ENCODE measurements at regions of chr15 and their contacts with region 1.

Region 1: DNA sequence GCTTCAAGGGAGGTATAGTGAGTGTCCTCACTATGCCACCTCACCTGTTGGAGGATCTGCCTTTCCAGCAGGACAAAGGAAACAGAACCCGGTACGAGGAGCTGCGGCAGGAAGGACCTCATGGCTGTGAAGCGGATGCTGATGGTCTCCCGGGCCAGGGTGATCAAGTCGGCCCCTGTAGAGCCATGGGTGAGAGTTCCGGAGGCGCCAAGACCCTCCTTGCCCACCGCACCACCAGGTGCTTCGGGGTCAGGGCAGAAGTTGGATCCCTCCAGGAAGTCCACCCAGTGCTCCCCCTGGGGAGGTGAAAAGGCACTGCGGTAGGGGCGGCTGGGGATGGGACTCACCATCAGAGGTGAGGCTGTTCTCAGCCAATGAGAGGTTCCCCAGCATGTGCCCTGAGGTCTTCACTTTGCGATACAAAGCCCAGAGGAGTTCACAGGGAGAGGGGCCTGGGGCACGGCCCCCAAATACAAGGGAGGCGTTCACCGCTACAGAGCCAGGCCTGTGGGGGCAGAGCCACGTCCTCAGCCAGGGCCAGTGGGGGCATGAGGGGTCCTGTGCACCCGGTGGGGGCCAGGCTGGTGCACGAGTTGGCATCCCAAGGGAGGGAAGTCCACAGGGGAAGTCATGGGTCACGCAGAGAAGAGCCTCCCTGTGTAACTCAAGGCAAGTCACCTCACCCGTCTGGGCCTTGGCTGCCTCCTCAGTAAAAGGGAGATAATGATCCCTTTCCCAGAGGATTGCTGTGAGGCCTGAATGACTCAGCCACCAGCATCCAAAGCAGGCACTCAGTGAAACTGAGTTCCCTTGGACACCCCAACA is 27.7 kb downstream of the C15orf39 start:
- DNase-seq: no peak
- H3K4me3 Mint-ChIP-seq: no peak overlapping the region
- H3K27ac Mint-ChIP-seq: no peak overlapping the region
- H3K4me1 Mint-ChIP-seq: no peaks in the 10 kb centered on the region
- H3K27me3 Mint-ChIP-seq: peaks cover 3% of the 10 kb centered on the region

Region 2: GRCh38 chr15:75008629-75009326 is 220.6 kb before region 1 on chr15:
- CTCF ChIA-PET with region 1: no interaction called
- intact Hi-C with region 1: no loop called
- DNase-seq: no peak
- H3K4me3 Mint-ChIP-seq: no peak overlapping the region
- H3K27ac Mint-ChIP-seq: no peak overlapping the region
- H3K4me1 Mint-ChIP-seq: peaks cover 7% of the 10 kb centered on the region
- H3K27me3 Mint-ChIP-seq: no peaks in the 10 kb centered on the region

Region 3: GRCh38 chr15:75215107-75216004 is 14.0 kb before region 1 on chr15:
- CTCF ChIA-PET with region 1: no interaction called
- intact Hi-C with region 1: no loop called
- DNase-seq: no peak
- H3K4me3 Mint-ChIP-seq: no peak overlapping the region
- H3K27ac Mint-ChIP-seq: no peak overlapping the region
- H3K4me1 Mint-ChIP-seq: peaks cover 3% of the 10 kb centered on the region
- H3K27me3 Mint-ChIP-seq: no peaks in the 10 kb centered on the region

Region 4: DNA sequence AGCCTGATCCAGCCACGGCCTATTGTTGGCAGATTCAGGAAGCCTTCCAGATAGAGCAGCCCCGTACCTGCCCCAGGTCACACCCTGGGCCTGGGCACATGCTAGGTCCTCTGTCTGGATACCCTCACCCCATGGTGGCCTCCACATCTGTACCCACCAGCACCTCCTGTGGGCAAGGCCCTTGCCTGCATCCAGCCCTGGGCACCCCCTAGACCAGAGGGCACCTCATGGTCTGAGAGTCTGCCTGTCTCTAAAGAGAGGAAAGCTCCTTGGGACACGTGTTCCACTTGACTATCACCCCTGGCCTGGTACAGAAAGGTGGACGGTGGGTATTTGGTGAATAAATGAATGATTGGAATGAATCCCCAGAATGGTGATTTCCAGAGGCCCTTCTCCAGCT is 97.6 kb after region 1 on chr15:
- CTCF ChIA-PET with region 1: no interaction called
- intact Hi-C with region 1: loop called (anchors 10 kb)
- DNase-seq: no peak
- H3K4me3 Mint-ChIP-seq: no peak overlapping the region
- H3K27ac Mint-ChIP-seq: no peak overlapping the region
- H3K4me1 Mint-ChIP-seq: no peaks in the 10 kb centered on the region
- H3K27me3 Mint-ChIP-seq: no peaks in the 10 kb centered on the region

Region 5: GRCh38 chr15:75502360-75502759 is 273.0 kb after region 1 on chr15:
- CTCF ChIA-PET with region 1: no interaction called
- intact Hi-C with region 1: no loop called
- DNase-seq: no peak
- H3K4me3 Mint-ChIP-seq: no peak overlapping the region
- H3K27ac Mint-ChIP-seq: no peak overlapping the region
- H3K4me1 Mint-ChIP-seq: no peaks in the 10 kb centered on the region
- H3K27me3 Mint-ChIP-seq: no peaks in the 10 kb centered on the region